A549 (cell line): ENCODE measurements at regions of chr2 and their contacts with region 1.

Region 1: DNA sequence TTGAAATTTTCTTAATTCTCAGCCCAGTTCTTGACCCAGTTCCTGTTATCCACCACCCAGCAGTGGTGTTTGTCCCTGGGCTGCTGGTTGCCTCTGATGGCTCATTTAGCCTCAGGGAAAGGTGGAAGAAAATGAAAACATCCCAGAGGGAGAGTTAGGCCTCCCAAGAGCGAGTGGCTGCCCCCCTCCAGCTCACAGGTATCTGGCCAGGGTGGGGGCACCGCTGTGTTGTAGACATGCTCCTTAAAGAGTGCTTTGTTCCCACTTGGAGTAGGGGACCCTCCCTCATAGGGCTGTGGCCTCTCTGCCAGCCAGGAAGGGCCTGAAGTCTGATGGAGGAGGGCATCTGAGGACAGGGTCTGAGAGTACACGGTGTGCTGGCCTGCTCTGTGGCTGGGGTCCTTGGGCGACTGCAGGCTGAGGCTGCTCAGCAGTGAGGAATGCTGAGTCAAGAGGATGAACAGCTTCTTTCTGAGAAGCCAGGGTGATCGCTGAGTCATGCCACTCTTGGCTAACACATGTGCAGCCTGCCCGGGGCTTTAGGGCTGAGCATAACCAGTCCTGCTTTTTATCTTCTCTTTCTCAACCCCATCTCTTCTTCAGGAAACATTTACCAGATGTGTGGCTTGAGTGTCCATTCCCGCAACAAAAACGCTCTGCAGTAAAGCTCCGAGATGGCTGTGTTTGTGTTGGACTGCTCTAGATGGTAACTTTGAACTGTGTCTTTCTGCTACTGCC is 72.3 kb downstream of the IL1R2 start:
- DNase-seq: peak; percentile 88 to 92
- ATAC-seq: peak; percentile 81 to 86
- H3K4me3 ChIP-seq: peak overlapping the region; percentile 30; the same call in 1 of the 3 replicates
- H3K27ac ChIP-seq: peak overlapping the region; percentile 98 to 99
- H3K4me1 ChIP-seq: peaks cover 55% of the 10 kb centered on the region
- CTCF ChIP-seq: no peak
- EP300 ChIP-seq: peak in 1 of 2 experiments; percentile 55; a peak in 2 of 5 replicates
- POLR2A ChIP-seq: no peak
- RAD21 ChIP-seq: peak; percentile 8 to 30; a peak in 1 of 5 replicates

Region 2: GRCh38 chr2:101893681-101894381 is 170.3 kb before region 1 on chr2:
- CTCF ChIA-PET with region 1: no interaction called
- POLR2A ChIA-PET with region 1: no interaction called
- DNase-seq: no peak
- ATAC-seq: no peak
- H3K4me3 ChIP-seq: no peak overlapping the region
- H3K27ac ChIP-seq: no peak overlapping the region
- H3K4me1 ChIP-seq: no peaks in the 10 kb centered on the region
- CTCF ChIP-seq: no peak
- EP300 ChIP-seq: no peak
- POLR2A ChIP-seq: no peak
- RAD21 ChIP-seq: no peak

Region 3: DNA sequence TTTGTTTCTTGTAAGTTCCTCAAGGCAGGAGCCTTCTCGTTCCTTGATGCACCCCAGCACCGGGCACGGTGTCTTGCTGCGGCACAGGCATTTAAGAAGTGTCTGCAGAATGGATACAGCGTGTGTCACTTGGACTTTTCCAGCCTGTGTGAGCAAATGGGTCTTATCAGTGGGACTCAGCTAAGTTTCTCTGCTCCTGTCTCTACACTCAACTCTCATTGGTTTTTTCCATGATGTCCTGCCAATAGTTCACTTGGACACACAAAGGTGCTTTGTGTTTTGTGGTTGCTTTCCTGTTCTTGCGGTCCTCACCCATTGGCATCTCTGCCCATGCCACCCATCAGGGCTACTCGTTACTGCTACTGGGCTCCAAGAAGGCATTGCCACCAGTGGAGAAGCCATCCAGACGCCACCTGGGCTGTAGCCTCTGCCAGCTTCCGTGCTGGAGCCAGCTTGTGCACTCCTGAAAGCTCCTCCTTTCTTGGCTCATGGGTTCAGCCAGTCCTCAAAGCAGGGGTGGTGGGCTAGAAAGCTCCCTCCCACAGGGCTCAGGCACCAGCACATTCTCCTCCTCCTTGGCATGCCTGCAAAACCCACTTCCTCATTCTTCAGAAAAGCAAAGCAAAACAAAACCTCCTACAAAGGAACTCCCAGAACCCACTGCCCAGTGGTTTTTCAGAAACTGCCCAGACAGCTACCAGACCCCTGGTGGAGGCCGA is 30.9 kb before region 1 on chr2:
- CTCF ChIA-PET with region 1: interaction called, 8 read pairs
- POLR2A ChIA-PET with region 1: interaction called, 23 read pairs
- DNase-seq: peak in 1 of 2 experiments; percentile 67
- ATAC-seq: peak; percentile 65 to 86
- H3K4me3 ChIP-seq: no peak overlapping the region
- H3K27ac ChIP-seq: peak overlapping the region; percentile 71 to 82
- H3K4me1 ChIP-seq: peaks cover 32% of the 10 kb centered on the region
- CTCF ChIP-seq: no peak
- EP300 ChIP-seq: no peak
- POLR2A ChIP-seq: no peak
- RAD21 ChIP-seq: no peak

Region 4: DNA sequence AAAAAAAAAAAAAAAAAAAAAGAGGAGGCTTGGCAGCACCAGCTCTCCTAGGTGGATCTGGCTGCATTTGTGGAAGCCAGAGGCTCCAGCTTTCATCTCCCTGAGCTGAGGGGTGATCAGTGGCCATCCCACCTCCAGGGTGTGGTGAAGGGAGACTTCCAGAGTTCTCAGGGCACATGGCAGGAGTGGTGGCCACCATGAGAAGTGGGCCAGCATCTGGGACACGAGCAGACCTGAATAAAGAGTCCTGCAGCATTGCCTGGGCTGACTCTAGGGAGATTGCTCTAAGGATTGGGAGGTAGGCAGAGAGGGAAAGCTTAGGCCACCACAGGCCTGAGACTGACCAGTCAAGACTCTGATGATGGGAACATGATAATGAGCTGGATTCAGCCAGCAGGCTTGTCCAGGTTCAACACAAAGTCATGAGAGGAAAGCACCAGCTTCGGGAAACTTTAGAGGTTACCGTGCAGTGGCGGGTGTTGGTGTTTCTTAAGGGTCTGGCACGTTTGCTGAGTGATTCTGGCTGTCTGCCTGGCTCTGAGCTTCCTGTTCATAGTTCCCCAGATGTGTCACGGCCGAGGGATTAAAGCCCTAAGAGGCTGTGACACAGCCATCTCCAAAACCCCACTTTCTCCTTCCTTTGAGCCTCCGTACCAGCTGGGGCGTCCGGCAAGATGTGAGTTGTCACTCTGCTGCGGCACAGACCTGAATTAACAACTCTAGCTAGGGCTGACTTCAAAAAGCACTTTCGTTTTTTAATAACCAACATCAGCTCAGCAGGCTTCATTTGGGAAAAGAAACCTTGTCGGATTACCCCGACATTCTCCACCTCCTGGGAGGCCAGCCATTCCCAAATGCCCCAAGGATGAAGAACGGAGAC is 40.1 kb after region 1 on chr2:
- CTCF ChIA-PET with region 1: interaction called, 8 read pairs
- POLR2A ChIA-PET with region 1: interaction called, 16 read pairs
- DNase-seq: peak in 1 of 2 experiments; percentile 71
- ATAC-seq: peak; percentile 51 to 61
- H3K4me3 ChIP-seq: peak overlapping the region; percentile 41
- H3K27ac ChIP-seq: peak overlapping the region; percentile 96 to 97
- H3K4me1 ChIP-seq: peaks cover 74% of the 10 kb centered on the region
- CTCF ChIP-seq: no peak
- EP300 ChIP-seq: no peak
- POLR2A ChIP-seq: no peak
- RAD21 ChIP-seq: peak in 1 of 2 experiments; percentile 6; a peak in 1 of 5 replicates

Region 5: GRCh38 chr2:102122110-102122509 is 58.0 kb after region 1 on chr2:
- CTCF ChIA-PET with region 1: no interaction called
- POLR2A ChIA-PET with region 1: no interaction called
- DNase-seq: no peak
- ATAC-seq: peak; percentile 47 to 63; a peak in 4 of 6 replicates
- H3K4me3 ChIP-seq: no peak overlapping the region
- H3K27ac ChIP-seq: peak overlapping the region; percentile 66 to 76
- H3K4me1 ChIP-seq: peaks cover 44% of the 10 kb centered on the region
- CTCF ChIP-seq: no peak
- EP300 ChIP-seq: no peak
- POLR2A ChIP-seq: no peak
- RAD21 ChIP-seq: no peak

Region 6: GRCh38 chr2:102141970-102142828 is 78.1 kb after region 1 on chr2 and contains the start of gene IL1R1:
- CTCF ChIA-PET with region 1: no interaction called
- POLR2A ChIA-PET with region 1: interaction called, 10 read pairs
- DNase-seq: peak; percentile 59 to 67
- ATAC-seq: peak; percentile 89 to 94
- H3K4me3 ChIP-seq: peak within 1 kb of the TSS; percentile 57
- H3K27ac ChIP-seq: peak within 1 kb of the TSS; percentile 86 to 97
- H3K4me1 ChIP-seq: peaks cover 10% of the 10 kb centered on the region
- CTCF ChIP-seq: no peak
- EP300 ChIP-seq: no peak
- POLR2A ChIP-seq: peak; percentile 37
- RAD21 ChIP-seq: peak in 1 of 2 experiments; percentile 22; a peak in 1 of 5 replicates
- polyA plus RNA-seq, gene IL1R1: 34.7 and 38.0 TPM in 2 replicates